Activated CD4-positive, alpha-beta T cell treated with anti-CD3 and anti-CD28 coated beads, Interleukin-2, amount 10 ng/mL, durations not matched to agents 7 days and 5 days (primary cell): ENCODE measurements at regions of chr6 and their contacts with region 1.

Region 1: GRCh38 chr6:37190159-37190535 is 20.2 kb downstream of the PIM1 start:
- DNase-seq: no peak
- H3K4me3 Mint-ChIP-seq: no peak overlapping the region
- H3K27ac Mint-ChIP-seq: peak overlapping the region; percentile 81
- H3K4me1 Mint-ChIP-seq: peaks cover 77% of the 10 kb centered on the region
- H3K27me3 Mint-ChIP-seq: no peaks in the 10 kb centered on the region

Region 2: GRCh38 chr6:35573495-35574110 is 1616.5 kb before region 1 on chr6:
- CTCF ChIA-PET with region 1: no interaction called
- POLR2A ChIA-PET with region 1: no interaction called
- DNase-seq: no peak
- H3K4me3 Mint-ChIP-seq: no peak overlapping the region
- H3K27ac Mint-ChIP-seq: no peak overlapping the region
- H3K4me1 Mint-ChIP-seq: no peaks in the 10 kb centered on the region
- H3K27me3 Mint-ChIP-seq: no peaks in the 10 kb centered on the region

Region 3: DNA sequence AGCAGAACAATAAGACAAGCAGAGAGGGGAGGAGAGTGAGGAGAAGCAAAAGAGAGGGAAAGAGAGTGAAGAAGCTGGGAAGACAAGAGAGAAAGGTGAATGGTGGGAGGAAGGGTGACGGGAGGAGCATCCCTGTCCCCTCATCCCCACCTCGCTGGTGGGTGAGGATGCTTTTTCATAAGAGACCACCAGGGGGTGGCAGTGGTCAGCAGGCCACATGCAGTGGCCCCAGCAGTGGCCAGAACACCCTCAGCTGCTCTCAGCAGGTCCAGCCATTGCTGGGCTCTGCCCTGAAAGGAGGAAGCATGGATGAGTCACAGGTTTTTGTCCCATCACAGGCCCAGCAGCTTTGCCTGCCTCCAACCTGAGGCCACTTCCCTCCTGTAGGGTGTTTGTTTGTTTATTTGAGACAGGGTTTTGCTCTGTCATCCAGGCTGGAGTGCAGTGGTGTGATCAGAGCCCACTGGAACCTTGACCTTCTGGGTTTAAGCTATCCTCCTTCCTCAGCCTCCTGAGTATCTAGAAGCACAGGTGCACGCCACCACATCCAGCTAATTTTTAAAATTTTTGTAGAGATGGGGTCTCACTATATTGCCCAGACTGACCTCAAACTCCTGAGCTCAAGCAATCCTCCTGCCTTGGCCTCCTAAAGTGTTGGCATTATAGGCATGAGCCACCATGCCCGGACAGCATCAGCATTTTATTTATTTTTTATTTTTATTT is 160.7 kb before region 1 on chr6:
- CTCF ChIA-PET with region 1: interaction called, 12 read pairs
- POLR2A ChIA-PET with region 1: no interaction called
- DNase-seq: peak; percentile 44
- H3K4me3 Mint-ChIP-seq: no peak overlapping the region
- H3K27ac Mint-ChIP-seq: peak overlapping the region; percentile 79
- H3K4me1 Mint-ChIP-seq: peaks cover 74% of the 10 kb centered on the region
- H3K27me3 Mint-ChIP-seq: no peaks in the 10 kb centered on the region

Region 4: DNA sequence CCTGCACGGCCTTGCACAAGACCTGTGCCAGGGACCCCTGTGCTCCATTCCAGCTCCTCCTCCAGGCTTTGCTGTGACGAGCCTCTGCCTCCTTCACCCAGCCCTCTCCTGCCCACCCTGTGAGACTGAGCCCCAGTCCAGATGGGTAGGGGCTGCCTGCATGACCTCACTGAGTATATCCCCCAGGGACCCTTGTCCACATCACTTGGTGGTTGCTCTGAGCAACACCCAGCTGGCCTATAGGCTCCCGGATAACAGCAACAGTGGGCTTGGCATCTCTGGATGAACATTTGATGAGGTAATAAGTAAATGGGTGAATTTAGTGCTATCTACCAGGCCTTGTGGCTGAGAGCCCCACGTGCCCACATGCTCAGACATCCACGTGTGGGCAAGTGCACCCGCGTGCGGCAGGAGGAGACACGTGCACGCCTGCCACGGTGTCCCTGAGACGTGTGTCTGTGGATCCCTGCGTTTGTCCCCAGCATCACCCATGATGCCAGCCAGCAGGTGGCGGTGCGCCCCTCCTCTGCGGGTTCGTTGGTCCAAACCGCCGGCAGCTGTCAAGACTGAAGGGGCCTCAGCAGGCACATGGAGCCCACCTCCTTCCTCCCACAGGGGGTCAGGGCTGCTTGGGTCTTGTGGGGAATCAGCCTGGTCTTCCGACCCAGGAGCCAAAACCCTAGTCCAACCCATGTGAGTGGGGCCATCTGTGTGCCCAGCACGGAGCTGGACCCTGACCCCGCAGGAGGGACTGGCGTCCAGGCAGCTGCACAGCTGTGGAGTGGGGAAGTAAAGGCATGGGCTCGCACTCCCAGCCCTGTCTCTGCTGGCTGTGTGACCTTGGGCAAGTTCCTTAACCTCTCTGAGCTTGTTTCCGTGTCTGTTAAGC is 138.8 kb before region 1 on chr6:
- CTCF ChIA-PET with region 1: interaction called, 10 read pairs
- POLR2A ChIA-PET with region 1: no interaction called
- DNase-seq: peak; percentile 91
- H3K4me3 Mint-ChIP-seq: peak overlapping the region; percentile 76
- H3K27ac Mint-ChIP-seq: peak overlapping the region; percentile 92
- H3K4me1 Mint-ChIP-seq: peaks cover 75% of the 10 kb centered on the region
- H3K27me3 Mint-ChIP-seq: no peaks in the 10 kb centered on the region